HepG2 (cell line): ENCODE measurements at regions of chr2 and their contacts with region 1.

Region 1: DNA sequence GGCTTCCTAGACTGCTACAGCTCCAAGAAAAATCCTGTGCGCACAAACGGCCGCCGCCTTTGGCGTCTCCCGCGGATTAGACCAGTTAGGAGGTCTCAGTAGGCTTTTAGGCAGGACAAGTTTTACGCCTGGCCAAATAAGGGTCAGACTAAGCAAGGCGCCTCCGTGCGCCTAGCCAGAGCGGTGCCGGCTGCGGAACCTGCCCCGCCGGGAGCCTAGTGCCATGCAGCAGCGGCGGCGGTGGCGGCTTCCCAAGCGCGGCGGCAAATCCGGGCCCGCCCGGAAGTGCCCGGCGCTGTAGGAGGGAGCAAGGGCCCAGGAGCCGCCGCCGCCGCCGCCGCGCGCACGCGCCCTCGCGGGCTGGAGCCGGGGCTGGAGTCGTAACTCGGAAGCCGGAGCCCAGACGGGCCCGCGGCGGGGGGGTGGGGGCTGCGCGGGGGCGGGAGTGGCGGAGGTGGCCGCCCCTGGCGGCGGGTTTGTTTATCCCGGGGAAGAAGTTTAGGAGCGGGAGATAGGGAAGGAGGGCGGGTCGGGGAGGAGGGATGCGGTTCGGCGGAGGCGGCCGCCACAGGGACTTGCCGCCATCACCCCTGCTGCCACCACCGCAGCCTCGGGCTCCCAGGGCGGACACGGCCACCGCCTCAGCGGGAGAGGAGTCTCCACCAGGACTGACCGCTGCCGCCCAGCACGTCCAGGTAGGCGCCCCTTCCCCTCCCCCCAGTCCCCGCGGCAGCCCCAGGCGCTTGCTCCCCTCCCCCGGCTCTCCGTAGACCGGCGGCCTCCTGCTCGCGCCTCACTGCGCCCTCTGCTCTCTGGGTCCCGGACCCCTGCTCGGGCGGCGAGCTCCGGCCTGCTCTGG is at the start of gene SPOPL:
- DNase-seq: peak; percentile 87
- ATAC-seq: peak; percentile 92
- H3K4me3 ChIP-seq: peak within 1 kb of the TSS; percentile 78 to 94 (median 93)
- H3K27ac ChIP-seq: peak within 1 kb of the TSS; percentile 96
- H3K4me1 ChIP-seq: peaks cover 56% of the 10 kb centered on the region
- H3K27me3 ChIP-seq: no peaks in the 10 kb centered on the region; a peak in 1 of 5 replicates
- CTCF ChIP-seq: peak; percentile 38; the same call in 1 of the 2 replicates
- EP300 ChIP-seq: 0 out of 4 replicates have a peak, but pooled peaks of 1 of the 2 experiments have one; percentile 29
- POLR2A ChIP-seq: peak; percentile 85 to 93
- RAD21 ChIP-seq: peak; percentile 81
- total RNA-seq, gene SPOPL: 51.6 and 68.8 TPM in 2 replicates

Region 2: GRCh38 chr2:138180692-138181386 is 320.8 kb before region 1 on chr2:
- CTCF ChIA-PET with region 1: no interaction called
- POLR2A ChIA-PET with region 1: no interaction called
- in situ Hi-C with region 1: no loop called
- intact Hi-C with region 1: loop called (anchors 5 kb)
- DNase-seq: peak; percentile 23
- ATAC-seq: peak; percentile 81
- H3K4me3 ChIP-seq: no peak overlapping the region
- H3K27ac ChIP-seq: no peak overlapping the region
- H3K4me1 ChIP-seq: peaks cover 35% of the 10 kb centered on the region
- H3K27me3 ChIP-seq: no peaks in the 10 kb centered on the region
- CTCF ChIP-seq: peak; percentile 55
- EP300 ChIP-seq: no peak
- POLR2A ChIP-seq: no peak
- RAD21 ChIP-seq: peak; percentile 19; the same call in 1 of the 2 replicates

Region 3: DNA sequence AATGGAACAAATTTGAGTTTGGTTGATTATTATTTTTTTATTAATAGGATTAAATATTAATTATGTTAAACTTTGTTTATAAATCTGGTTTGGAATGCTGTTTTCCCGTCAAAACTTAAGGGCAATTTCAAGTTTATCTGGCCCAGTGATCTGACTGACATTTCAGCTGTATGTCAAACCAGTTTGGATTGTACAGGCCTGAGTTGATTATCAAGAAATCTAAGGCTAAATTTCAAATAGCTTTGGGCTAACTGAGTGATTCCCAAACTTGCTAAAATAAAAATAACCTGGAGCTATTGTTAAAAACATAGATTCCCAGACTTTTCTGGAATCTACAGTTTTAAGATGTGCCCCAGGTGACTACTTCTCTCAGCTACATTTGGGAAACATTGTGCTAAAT is 65.9 kb before region 1 on chr2:
- CTCF ChIA-PET with region 1: no interaction called
- POLR2A ChIA-PET with region 1: interaction called, 4 read pairs
- in situ Hi-C with region 1: no loop called
- intact Hi-C with region 1: loop called (anchors 5 kb)
- DNase-seq: no peak
- ATAC-seq: no peak
- H3K4me3 ChIP-seq: no peak overlapping the region
- H3K27ac ChIP-seq: no peak overlapping the region
- H3K4me1 ChIP-seq: peaks cover 38% of the 10 kb centered on the region
- H3K27me3 ChIP-seq: no peaks in the 10 kb centered on the region
- CTCF ChIP-seq: no peak
- EP300 ChIP-seq: no peak
- POLR2A ChIP-seq: no peak
- RAD21 ChIP-seq: no peak

Region 4: DNA sequence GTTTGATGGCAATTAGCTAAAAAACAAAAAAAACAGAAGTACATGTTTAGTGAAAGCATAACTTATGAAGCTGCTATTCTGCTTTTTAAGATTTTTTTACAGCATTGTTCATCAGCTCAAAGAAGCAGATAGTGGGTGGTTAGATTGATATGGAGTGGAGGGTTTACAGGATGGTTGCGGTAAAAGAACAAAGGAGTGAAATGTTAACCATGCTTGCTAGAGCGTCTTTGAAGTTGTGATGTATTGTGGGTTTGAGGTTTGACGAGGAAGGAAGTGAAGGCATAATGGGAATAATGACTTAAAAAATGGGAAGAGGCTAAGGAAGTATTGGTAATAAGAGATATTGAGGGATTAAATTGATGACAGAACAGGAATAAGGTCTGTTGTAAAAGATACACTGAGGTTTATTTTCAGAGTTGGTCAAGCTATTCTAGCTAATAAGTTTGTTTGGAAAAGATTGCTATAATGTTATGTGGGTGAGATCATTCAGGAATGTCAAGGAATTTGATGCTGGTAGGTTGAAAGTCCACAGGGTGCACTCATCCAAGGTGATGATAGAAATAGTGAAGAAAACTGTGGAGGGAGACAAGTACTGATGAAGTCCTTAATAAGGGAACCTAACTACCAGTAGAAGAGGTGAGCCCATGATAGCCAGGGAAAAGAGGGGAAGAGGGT is 14.5 kb after region 1 on chr2:
- CTCF ChIA-PET with region 1: no interaction called
- POLR2A ChIA-PET with region 1: interaction called, 24 read pairs
- in situ Hi-C with region 1: no loop called
- intact Hi-C with region 1: no loop called
- DNase-seq: peak; percentile 72
- ATAC-seq: peak; percentile 76
- H3K4me3 ChIP-seq: no peak overlapping the region
- H3K27ac ChIP-seq: peak overlapping the region; percentile 10
- H3K4me1 ChIP-seq: peaks cover 47% of the 10 kb centered on the region
- H3K27me3 ChIP-seq: no peaks in the 10 kb centered on the region
- CTCF ChIP-seq: no peak
- EP300 ChIP-seq: no peak
- POLR2A ChIP-seq: no peak
- RAD21 ChIP-seq: no peak